Heart right ventricle (tissue), 16 donors: ENCODE measurements at regions of chr9 and their contacts with region 1.

Region 1: GRCh38 chr9:136722969-136723356 is 10.6 kb downstream of the DIPK1B start:
- DNase-seq: no peak
- ATAC-seq: no peak
- H3K4me3 ChIP-seq: no peak overlapping the region
- H3K27ac ChIP-seq: peak overlapping the region in 1 of 10 donors; percentile 3
- H3K4me1 ChIP-seq: peaks cover 20 to 85% (median 78%) of the 10 kb centered on the region in 9 donors
- H3K27me3 ChIP-seq: no peaks in the 10 kb centered on the region
- CTCF ChIP-seq: no peak

Region 2: GRCh38 chr9:136676920-136677686 is 45.9 kb before region 1 on chr9:
- intact Hi-C with region 1: loop called in 1 of 10 experiments (anchors 1 kb)
- DNase-seq: no peak
- ATAC-seq: no peak
- H3K4me3 ChIP-seq: no peak overlapping the region
- H3K27ac ChIP-seq: no peak overlapping the region
- H3K4me1 ChIP-seq: peaks cover 3 to 52% (median 22%) of the 10 kb centered on the region in 9 donors
- H3K27me3 ChIP-seq: no peaks in the 10 kb centered on the region
- CTCF ChIP-seq: no peak